Endothelial cell of umbilical vein (primary cell): ENCODE measurements at regions of chr6 and their contacts with region 1.

Region 1: GRCh38 chr6:166627033-166627874 is at the start of gene RPS6KA2:
- DNase-seq: peak; percentile 100
- H3K4me3 ChIP-seq: peak within 1 kb of the TSS; percentile 74 to 87 (median 83)
- H3K27ac ChIP-seq: peak within 1 kb of the TSS; percentile 90
- H3K4me1 ChIP-seq: peaks cover 37% of the 10 kb centered on the region
- H3K27me3 ChIP-seq: no peaks in the 10 kb centered on the region
- CTCF ChIP-seq: peak in 1 of 2 donors; percentile 16
- POLR2A ChIP-seq: peak; percentile 90
- total RNA-seq, gene RPS6KA2: 72.6 and 75.8 TPM in 2 replicates

Region 2: GRCh38 chr6:166420351-166420750 is 206.9 kb before region 1 on chr6:
- CTCF ChIA-PET with region 1: no interaction called
- POLR2A ChIA-PET with region 1: interaction called, 7 read pairs
- dilution Hi-C with region 1: no loop called
- intact Hi-C with region 1: loop called (anchors 1 kb)
- DNase-seq: peak; percentile 64
- H3K4me3 ChIP-seq: no peak overlapping the region
- H3K27ac ChIP-seq: no peak overlapping the region
- H3K4me1 ChIP-seq: peaks cover 5% of the 10 kb centered on the region
- H3K27me3 ChIP-seq: no peaks in the 10 kb centered on the region
- CTCF ChIP-seq: peak; percentile 24 to 32
- POLR2A ChIP-seq: no peak

Region 3: GRCh38 chr6:166488076-166488685 is 139.1 kb before region 1 on chr6:
- CTCF ChIA-PET with region 1: no interaction called
- POLR2A ChIA-PET with region 1: interaction called, 5 read pairs
- dilution Hi-C with region 1: no loop called
- intact Hi-C with region 1: loop called (anchors 1 kb)
- DNase-seq: peak; percentile 99
- H3K4me3 ChIP-seq: no peak overlapping the region
- H3K27ac ChIP-seq: peak overlapping the region; percentile 92
- H3K4me1 ChIP-seq: peaks cover 49% of the 10 kb centered on the region
- H3K27me3 ChIP-seq: no peaks in the 10 kb centered on the region
- CTCF ChIP-seq: no peak
- POLR2A ChIP-seq: peak; percentile 77

Region 4: GRCh38 chr6:166586424-166587156 is 40.7 kb before region 1 on chr6 and contains the start of gene RAMACL:
- CTCF ChIA-PET with region 1: interaction called, 3 read pairs
- POLR2A ChIA-PET with region 1: interaction called, 3 read pairs
- dilution Hi-C with region 1: no loop called
- intact Hi-C with region 1: loop called (anchors 5 kb)
- DNase-seq: no peak
- H3K4me3 ChIP-seq: no peak within 1 kb of the TSS
- H3K27ac ChIP-seq: no peak within 1 kb of the TSS
- H3K4me1 ChIP-seq: peaks cover 34% of the 10 kb centered on the region
- H3K27me3 ChIP-seq: no peaks in the 10 kb centered on the region
- CTCF ChIP-seq: no peak
- POLR2A ChIP-seq: no peak
- total RNA-seq, gene RAMACL: 4.0 and 5.3 TPM in 2 replicates

Region 5: GRCh38 chr6:166640342-166641043 is 13.2 kb after region 1 on chr6:
- CTCF ChIA-PET with region 1: interaction called, 15 read pairs
- POLR2A ChIA-PET with region 1: interaction called, 11 read pairs
- dilution Hi-C with region 1: no loop called
- intact Hi-C with region 1: loop called (anchors 1 kb)
- DNase-seq: peak; percentile 76
- H3K4me3 ChIP-seq: peak overlapping the region in 1 of 3 experiments; percentile 21
- H3K27ac ChIP-seq: peak overlapping the region; percentile 59
- H3K4me1 ChIP-seq: peaks cover 34% of the 10 kb centered on the region
- H3K27me3 ChIP-seq: no peaks in the 10 kb centered on the region
- CTCF ChIP-seq: peak in 1 of 2 donors; percentile 13
- POLR2A ChIP-seq: no peak

Region 6: GRCh38 chr6:166707045-166707444 is 79.8 kb after region 1 on chr6:
- CTCF ChIA-PET with region 1: no interaction called
- POLR2A ChIA-PET with region 1: no interaction called
- dilution Hi-C with region 1: no loop called
- intact Hi-C with region 1: loop called (anchors 1 kb)
- DNase-seq: peak; percentile 54
- H3K4me3 ChIP-seq: no peak overlapping the region
- H3K27ac ChIP-seq: no peak overlapping the region
- H3K4me1 ChIP-seq: no peaks in the 10 kb centered on the region
- H3K27me3 ChIP-seq: peaks cover 8% of the 10 kb centered on the region in 2 experiments
- CTCF ChIP-seq: peak; percentile 27 to 76
- POLR2A ChIP-seq: no peak

Region 7: DNA sequence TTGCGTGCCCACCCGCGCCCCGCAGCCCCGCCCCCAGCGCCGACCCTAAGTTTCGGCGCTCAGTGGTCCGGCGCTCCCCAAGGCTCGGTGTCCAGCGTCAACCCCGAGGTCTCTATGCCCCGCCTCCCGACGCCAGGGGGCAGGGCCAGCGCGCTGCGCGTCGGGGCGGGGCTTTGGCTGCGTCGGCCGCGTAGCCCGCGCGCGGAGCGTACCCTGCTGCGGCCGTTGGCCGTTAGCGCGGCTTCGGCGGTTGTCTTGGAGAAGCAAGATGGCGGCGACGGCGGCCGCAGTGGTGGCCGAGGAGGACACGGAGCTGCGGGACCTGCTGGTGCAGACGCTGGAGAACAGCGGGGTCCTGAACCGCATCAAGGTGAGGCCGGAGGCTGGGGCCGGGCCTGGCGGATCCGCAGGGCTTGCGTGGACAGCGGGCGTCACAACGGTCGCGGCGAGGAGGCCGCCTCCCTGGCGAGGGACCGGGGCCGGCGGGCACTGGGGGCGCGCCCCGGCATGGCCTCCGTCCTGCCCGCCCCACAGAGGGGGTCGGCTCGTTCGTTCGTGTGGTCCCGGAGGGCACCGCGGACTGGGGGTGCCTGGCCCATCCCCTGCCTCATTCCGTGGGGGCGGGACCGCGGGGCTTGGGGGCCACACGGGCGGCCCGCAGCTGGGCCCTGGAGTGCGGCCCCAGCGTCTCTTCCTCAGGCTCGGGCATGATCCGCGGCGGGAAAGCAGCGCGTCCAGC is 372.1 kb after region 1 on chr6 and contains the start of gene CEP43:
- CTCF ChIA-PET with region 1: no interaction called
- POLR2A ChIA-PET with region 1: no interaction called
- dilution Hi-C with region 1: no loop called
- intact Hi-C with region 1: loop called (anchors 1 kb)
- DNase-seq: peak; percentile 98
- H3K4me3 ChIP-seq: peak within 1 kb of the TSS; percentile 60 to 93 (median 86)
- H3K27ac ChIP-seq: peak within 1 kb of the TSS; percentile 52
- H3K4me1 ChIP-seq: peaks cover 20% of the 10 kb centered on the region
- H3K27me3 ChIP-seq: no peaks in the 10 kb centered on the region
- CTCF ChIP-seq: no peak
- POLR2A ChIP-seq: peak; percentile 61
- total RNA-seq, gene CEP43: 19.0 and 22.5 TPM in 2 replicates